Activated CD4-positive, alpha-beta T cell treated with anti-CD3 and anti-CD28 coated beads, Interleukin-2, amount 10 ng/mL, durations not matched to agents 24 days and 14 days (primary cell): ENCODE measurements at regions of chr19 and their contacts with region 1.

Region 1: DNA sequence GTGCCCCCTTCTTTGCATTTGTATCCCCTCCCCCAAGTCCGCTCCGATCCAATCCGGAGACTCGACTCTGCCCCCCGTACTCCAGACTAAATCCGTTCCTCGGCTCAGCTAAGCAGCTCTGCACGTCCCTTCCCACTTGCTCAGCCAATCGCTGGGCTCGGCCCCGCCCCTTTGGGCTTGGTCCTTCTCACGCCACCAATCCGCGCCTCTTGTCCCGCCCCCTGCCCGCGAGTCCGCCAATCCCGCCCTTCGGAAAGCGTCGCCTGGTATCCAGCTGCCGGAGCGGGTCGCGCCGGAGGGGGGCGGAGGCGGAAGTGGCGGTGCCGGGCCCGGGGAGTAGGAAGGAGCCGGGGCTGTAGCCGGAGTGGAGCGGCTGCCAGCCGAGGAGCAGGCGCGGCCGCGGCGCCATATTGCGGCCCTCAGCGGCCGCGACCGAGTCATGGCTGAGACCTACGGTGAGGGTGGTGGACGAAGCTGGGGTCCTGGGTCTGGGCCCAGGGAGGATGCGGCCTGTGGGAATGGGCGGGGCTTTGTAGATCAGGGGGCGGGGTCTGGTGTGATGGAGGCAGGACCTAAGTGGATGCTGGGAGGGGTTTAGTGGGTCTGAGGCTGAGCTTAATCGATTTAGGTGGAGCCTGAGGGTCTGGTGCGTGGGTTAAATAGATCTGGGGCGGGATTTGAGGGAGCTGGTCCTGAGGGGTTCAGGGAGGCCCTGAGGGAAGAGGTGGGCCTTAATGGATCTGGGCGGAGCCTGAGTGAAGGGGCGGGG is at the start of gene RAB4B:
- DNase-seq: peak; percentile 100
- H3K4me3 Mint-ChIP-seq: peak within 1 kb of the TSS; percentile 94
- H3K27ac Mint-ChIP-seq: peak within 1 kb of the TSS; percentile 96
- H3K4me1 Mint-ChIP-seq: peaks cover 53% of the 10 kb centered on the region
- H3K27me3 Mint-ChIP-seq: no peaks in the 10 kb centered on the region
- total RNA-seq, gene RAB4B: 36.3 and 41.0 TPM in 2 replicates

Region 2: DNA sequence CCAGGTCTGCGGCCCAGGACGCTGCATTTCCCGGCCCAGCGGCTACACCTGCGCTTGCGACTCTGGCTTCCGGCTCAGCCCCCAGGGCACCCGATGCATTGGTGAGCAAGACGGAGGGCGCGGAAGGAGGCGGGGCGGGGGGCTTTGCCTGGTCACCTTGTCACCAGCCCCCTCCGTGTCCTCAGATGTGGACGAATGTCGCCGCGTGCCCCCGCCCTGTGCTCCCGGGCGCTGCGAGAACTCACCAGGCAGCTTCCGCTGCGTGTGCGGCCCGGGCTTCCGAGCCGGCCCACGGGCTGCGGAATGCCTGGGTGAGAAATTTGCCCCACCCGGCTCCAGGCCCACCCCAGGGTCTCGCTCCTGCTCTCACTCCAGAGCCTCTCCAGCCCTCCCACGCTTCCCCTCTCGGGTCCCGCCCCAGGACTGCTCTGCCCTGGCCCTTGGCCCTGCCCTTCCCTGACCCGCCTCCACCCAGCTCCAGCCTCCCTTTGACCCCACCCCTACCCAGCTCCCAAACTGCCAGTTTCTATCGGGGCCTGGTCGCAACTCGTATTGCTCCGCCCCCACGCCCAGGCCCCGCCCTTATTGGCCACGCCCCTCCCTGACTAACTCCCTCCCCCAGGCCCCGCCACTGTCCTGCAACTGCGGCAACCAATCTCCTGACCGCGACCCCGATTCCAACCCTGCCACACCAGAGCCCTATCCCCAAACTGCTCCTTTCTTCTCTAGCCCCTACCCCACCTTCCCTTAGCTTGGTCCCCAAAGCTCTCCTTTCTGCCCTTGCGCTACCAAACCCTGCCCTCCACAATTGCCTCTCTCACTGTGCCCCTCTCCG is 168.3 kb before region 1 on chr19:
- intact Hi-C with region 1: loop called (anchors 1 kb)
- DNase-seq: peak; percentile 97
- H3K4me3 Mint-ChIP-seq: peak overlapping the region; percentile 95
- H3K27ac Mint-ChIP-seq: peak overlapping the region; percentile 97
- H3K4me1 Mint-ChIP-seq: peaks cover 43% of the 10 kb centered on the region
- H3K27me3 Mint-ChIP-seq: no peaks in the 10 kb centered on the region

Region 3: DNA sequence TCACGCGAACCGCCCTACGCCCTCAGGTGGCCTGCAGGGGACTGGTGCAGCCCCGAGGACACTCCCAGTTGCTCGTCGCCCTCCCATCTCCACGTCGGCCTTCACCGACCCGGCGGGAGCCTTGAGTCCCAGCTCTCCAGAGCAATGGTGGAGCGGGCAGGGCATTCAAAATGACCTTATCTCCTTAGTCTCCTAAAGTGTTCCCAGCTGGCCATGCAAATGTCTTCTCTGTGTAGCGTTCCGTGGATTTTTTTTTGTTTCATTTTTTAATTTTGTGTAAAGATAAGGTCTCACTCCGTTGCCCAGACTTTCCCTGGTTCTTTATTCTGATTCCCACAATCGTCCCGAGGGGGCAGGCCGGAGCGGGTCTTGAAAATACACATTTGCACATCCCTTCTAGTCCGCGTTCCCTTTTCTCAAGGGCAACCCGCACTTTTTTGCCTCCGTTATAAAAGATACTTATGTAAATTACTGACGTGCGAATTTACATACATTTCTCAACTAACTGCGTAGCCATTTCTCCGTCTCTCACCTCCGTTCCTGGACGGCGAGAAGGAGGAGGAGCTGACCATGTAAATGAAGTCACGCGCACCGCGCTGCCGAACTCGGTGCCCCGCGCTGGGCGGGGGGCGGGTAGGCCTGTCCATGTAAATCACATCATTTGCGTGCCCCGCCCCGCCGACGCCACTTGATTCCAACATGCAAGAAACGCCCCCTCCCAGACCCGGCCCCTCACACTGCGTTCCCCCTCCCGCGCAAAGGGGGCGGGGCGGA is 20.3 kb after region 1 on chr19:
- intact Hi-C with region 1: loop called (anchors 1 kb)
- DNase-seq: peak; percentile 100
- H3K4me3 Mint-ChIP-seq: peak overlapping the region; percentile 89
- H3K27ac Mint-ChIP-seq: peak overlapping the region; percentile 95
- H3K4me1 Mint-ChIP-seq: peaks cover 51% of the 10 kb centered on the region
- H3K27me3 Mint-ChIP-seq: no peaks in the 10 kb centered on the region

Region 4: GRCh38 chr19:40995355-40995754 is 217.2 kb after region 1 on chr19:
- intact Hi-C with region 1: no loop called
- DNase-seq: no peak
- H3K4me3 Mint-ChIP-seq: no peak overlapping the region
- H3K27ac Mint-ChIP-seq: no peak overlapping the region
- H3K4me1 Mint-ChIP-seq: peaks cover 2% of the 10 kb centered on the region
- H3K27me3 Mint-ChIP-seq: peaks cover 9% of the 10 kb centered on the region

Region 5: GRCh38 chr19:42619271-42619670 is 1841.2 kb after region 1 on chr19:
- intact Hi-C with region 1: no loop called
- DNase-seq: no peak
- H3K4me3 Mint-ChIP-seq: no peak overlapping the region
- H3K27ac Mint-ChIP-seq: no peak overlapping the region
- H3K4me1 Mint-ChIP-seq: no peaks in the 10 kb centered on the region
- H3K27me3 Mint-ChIP-seq: peaks cover 33% of the 10 kb centered on the region